Heart right ventricle (tissue), 16 donors: ENCODE measurements at regions of chr10 and their contacts with region 1.

Region 1: DNA sequence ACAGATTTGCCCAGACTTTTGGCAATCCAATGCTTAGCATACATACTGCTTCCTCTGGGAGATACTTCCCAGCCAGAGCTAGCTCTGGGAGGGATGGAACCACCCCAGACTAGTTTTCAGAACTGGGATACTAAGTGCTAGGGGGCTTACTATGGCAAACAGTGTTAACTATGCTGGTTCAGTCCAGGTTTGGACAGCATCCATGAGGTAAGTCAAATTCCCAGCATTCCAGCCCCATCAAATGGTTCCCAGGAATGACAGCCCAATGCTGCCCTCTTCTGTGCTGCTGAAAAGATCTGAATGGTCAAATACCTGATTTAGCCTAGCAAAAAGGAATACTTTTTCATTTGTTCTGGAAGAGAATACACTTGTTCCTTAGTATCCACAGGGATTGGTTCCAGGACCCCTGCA is 141.7 kb upstream of the CCDC6 start:
- DNase-seq: no peak
- ATAC-seq: peak in 1 of 8 donors; percentile 31
- H3K4me3 ChIP-seq: no peak overlapping the region
- H3K27ac ChIP-seq: no peak overlapping the region
- H3K4me1 ChIP-seq: peaks cover 0 to 8% (median 0%) of the 10 kb centered on the region in 9 donors
- H3K27me3 ChIP-seq: no peaks in the 10 kb centered on the region
- CTCF ChIP-seq: peak in 7 of 9 donors; percentile 10 to 41 (median 30)

Region 2: GRCh38 chr10:59865101-59865500 is 183.0 kb before region 1 on chr10:
- intact Hi-C with region 1: loop called in 1 of 10 experiments (anchors 10 kb)
- DNase-seq: peak in 1 of 2 donors; percentile 40
- ATAC-seq: peak; percentile 67 to 88 (median 76)
- H3K4me3 ChIP-seq: no peak overlapping the region
- H3K27ac ChIP-seq: peak overlapping the region in 1 of 10 donors; percentile 25
- H3K4me1 ChIP-seq: peaks cover 0 to 45% (median 20%) of the 10 kb centered on the region in 9 donors
- H3K27me3 ChIP-seq: no peaks in the 10 kb centered on the region
- CTCF ChIP-seq: peak in 7 of 9 donors; percentile 38 to 68 (median 51)

Region 3: GRCh38 chr10:60175441-60175971 is 127.4 kb after region 1 on chr10:
- intact Hi-C with region 1: no loop called
- DNase-seq: no peak
- ATAC-seq: no peak
- H3K4me3 ChIP-seq: no peak overlapping the region
- H3K27ac ChIP-seq: no peak overlapping the region
- H3K4me1 ChIP-seq: peaks cover 0 to 8% (median 0%) of the 10 kb centered on the region in 9 donors
- H3K27me3 ChIP-seq: no peaks in the 10 kb centered on the region
- CTCF ChIP-seq: no peak

Region 4: DNA sequence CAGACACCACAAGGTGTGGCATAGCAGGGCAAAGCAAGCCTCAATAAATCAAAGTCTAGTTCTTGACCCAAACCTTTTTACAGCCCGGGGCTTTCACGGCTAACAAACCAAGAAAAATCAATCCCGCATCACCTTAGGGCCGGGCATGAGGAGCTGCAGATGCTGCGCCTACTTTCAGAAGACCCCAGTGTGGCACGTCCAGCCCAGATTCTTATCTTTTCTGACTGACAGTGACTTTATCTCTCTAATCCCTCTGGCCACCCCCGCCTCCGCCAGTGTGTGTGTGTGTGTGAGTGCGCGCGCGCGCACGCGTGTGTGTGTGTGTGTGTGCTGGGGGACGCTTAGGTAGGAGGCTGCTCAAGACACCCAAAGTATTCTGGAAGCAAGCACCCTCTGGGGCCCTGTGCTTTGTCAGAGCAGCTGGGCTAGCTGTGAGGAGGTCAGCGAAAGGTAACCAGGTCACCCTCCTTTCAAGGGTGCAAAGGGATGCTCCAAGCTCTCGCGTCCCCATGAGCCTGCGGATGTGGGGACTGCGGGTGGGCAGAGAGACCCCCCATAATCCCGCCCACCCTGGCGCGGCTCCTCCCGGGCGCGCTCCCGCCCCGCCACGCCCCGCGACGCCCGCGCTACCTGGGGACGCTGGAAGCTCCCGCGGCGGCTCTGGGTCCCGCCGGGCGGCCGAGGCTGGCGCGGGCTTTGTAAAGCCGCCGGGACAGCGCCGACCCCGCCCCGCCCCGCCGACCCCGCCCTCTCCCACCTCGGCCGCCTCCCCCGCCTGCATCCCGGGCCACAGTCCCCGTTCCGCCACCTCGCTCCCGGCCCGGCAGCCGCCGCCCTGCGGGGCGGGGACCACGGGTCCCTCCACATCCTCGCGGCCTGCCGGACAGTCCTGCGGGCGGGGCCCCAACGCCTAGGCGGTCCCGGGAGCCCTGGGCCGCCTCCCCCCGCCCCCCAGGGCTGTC is 953.0 kb after region 1 on chr10:
- intact Hi-C with region 1: no loop called
- DNase-seq: peak in 1 of 2 donors; percentile 17
- ATAC-seq: peak in 3 of 8 donors; percentile 33 to 56 (median 50)
- H3K4me3 ChIP-seq: peak overlapping the region in 9 of 10 donors; percentile 28 to 47 (median 43)
- H3K27ac ChIP-seq: no peak overlapping the region
- H3K4me1 ChIP-seq: peaks cover 0 to 10% (median 0%) of the 10 kb centered on the region in 9 donors
- H3K27me3 ChIP-seq: peaks cover 0 to 45% (median 25%) of the 10 kb centered on the region in 7 donors
- CTCF ChIP-seq: no peak